Heart left ventricle (tissue), 16 donors: ENCODE measurements at regions of chr10 and their contacts with region 1.

Region 1: GRCh38 chr10:63115732-63116383 is 17.3 kb upstream of the NRBF2 start:
- DNase-seq: peak; percentile 69 to 91 (median 89)
- ATAC-seq: peak; percentile 96 to 98 (median 98)
- H3K4me3 ChIP-seq: no peak overlapping the region
- H3K27ac ChIP-seq: peak overlapping the region; percentile 26 to 92 (median 83)
- H3K4me1 ChIP-seq: peaks cover 3 to 35% (median 26%) of the 10 kb centered on the region in 12 donors
- H3K27me3 ChIP-seq: no peaks in the 10 kb centered on the region
- CTCF ChIP-seq: no peak
- POLR2A ChIP-seq: no peak

Region 2: GRCh38 chr10:63133056-63133820 is 17.4 kb after region 1 on chr10 and contains the start of gene NRBF2:
- intact Hi-C with region 1: loop called in 1 of 10 experiments (anchors 1 kb)
- DNase-seq: peak; percentile 97 to 99 (median 99)
- ATAC-seq: peak; percentile 99 to 100 (median 100)
- H3K4me3 ChIP-seq: peak within 1 kb of the TSS; percentile 81 to 100 (median 94)
- H3K27ac ChIP-seq: peak within 1 kb of the TSS; percentile 78 to 99 (median 92)
- H3K4me1 ChIP-seq: peaks cover 5 to 41% (median 23%) of the 10 kb centered on the region in 12 donors
- H3K27me3 ChIP-seq: no peaks in the 10 kb centered on the region
- CTCF ChIP-seq: peak in 5 of 12 donors; percentile 8 to 39 (median 19)
- POLR2A ChIP-seq: peak; percentile 85 to 96
- total RNA-seq, gene NRBF2: 7.4 to 18.3 (median 10.7) TPM

Region 3: GRCh38 chr10:63145782-63146181 is 29.9 kb after region 1 on chr10:
- intact Hi-C with region 1: loop called in 1 of 10 experiments (anchors 5 kb)
- DNase-seq: no peak
- ATAC-seq: peak in 1 of 4 donors; percentile 39
- H3K4me3 ChIP-seq: no peak overlapping the region
- H3K27ac ChIP-seq: peak overlapping the region in 1 of 12 donors; percentile 5
- H3K4me1 ChIP-seq: peaks cover 0 to 41% (median 16%) of the 10 kb centered on the region in 12 donors
- H3K27me3 ChIP-seq: no peaks in the 10 kb centered on the region
- CTCF ChIP-seq: no peak
- POLR2A ChIP-seq: no peak